WTC11 (cell line): ENCODE measurements at regions of chr7 and their contacts with region 1.

Region 1: DNA sequence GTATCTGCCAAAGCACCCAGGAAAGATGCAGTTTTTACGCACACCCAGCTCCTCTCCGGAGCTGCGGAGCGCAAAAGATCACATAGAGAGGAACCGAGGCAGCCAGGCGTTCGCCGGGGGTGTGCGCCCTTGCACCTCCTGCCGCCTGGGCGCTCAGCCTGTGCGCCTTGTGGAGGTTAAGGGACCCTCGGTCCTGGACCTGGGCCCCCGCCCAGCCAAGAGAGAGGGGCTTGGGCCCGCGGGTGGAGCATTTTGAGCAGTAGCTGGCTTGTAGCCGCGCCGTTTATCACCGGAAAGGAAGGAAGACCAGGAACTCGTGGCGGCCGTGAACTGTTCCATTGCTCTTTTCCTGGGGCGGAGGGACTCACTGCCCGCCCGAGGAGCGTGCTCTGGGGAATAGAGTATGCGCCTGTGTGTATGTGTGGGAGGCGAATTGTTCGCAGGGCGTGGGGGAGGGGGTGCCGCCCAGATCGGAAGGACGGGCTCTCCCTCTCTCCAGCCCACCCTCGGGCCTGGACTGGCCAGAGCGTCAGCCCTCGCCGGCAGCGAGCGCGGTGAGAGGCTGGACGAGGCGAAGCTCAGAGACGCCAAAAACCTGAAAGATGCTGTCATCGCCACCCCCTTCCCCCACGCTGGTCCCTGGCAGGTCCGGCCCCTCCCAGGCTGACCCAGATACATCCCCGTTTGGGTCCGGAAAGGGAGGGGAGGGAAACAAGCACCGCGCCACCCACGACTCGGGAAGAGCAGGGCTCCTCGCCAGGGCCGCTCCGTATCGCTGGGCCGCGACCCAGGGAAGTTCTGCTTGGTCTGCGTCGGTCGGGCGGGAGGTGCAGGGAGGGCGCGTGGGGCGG is 1.2 kb upstream of the WNT2 start:
- DNase-seq: peak; percentile 38
- ATAC-seq: peak; percentile 62
- H3K4me3 Mint-ChIP-seq: peak overlapping the region; percentile 88
- H3K27ac Mint-ChIP-seq: no peak overlapping the region
- H3K4me1 Mint-ChIP-seq: peaks cover 16% of the 10 kb centered on the region
- H3K27me3 Mint-ChIP-seq: peaks cover 94% of the 10 kb centered on the region
- CTCF ChIP-seq: no peak

Region 2: DNA sequence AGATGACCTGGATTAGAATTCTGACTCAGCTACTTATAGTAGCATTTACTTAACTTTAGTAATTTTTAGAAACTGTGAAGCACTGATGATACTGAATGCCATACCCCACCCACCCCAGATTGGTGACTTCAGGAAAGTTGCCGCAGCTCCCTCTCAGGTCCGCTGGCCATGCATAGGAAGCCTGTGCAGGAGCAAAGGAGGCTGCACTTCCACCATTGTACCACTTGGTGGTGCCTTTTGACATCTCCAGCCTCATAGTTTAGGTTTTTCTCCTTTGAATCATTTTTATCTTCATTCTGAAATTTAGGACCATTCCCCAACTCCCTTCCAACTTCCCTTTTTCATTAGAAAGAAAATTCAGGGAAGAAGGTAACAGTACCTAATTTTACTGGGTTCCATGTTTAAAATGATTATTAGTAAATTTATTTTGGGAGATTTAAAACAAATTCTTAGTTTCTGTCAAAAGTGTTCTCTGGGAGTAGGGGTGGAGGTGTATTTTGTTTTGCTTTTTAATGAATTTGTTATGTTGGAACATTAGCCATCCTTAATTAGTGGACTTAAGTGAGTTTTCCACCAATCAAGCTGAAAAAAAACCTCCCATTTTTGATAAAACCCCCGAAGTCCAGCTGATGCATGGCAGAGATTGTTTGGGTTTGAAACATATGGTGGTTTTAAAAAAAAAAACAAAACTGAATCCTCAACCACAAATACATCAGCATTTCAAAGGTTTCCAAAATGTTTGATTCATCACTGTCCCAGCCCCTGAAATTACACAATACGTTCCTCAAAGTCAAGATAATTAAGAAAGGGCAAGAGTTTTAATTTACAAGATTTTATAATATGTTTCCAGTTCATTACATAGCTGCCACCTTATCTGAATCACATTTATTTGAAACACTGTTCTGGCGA is 110.9 kb before region 1 on chr7:
- CTCF ChIA-PET with region 1: interaction called, 24 read pairs
- POLR2A ChIA-PET with region 1: no interaction called
- DNase-seq: peak; percentile 73
- ATAC-seq: peak; percentile 89
- H3K4me3 Mint-ChIP-seq: no peak overlapping the region
- H3K27ac Mint-ChIP-seq: no peak overlapping the region
- H3K4me1 Mint-ChIP-seq: peaks cover 12% of the 10 kb centered on the region
- H3K27me3 Mint-ChIP-seq: no peaks in the 10 kb centered on the region
- CTCF ChIP-seq: peak; percentile 94

Region 3: DNA sequence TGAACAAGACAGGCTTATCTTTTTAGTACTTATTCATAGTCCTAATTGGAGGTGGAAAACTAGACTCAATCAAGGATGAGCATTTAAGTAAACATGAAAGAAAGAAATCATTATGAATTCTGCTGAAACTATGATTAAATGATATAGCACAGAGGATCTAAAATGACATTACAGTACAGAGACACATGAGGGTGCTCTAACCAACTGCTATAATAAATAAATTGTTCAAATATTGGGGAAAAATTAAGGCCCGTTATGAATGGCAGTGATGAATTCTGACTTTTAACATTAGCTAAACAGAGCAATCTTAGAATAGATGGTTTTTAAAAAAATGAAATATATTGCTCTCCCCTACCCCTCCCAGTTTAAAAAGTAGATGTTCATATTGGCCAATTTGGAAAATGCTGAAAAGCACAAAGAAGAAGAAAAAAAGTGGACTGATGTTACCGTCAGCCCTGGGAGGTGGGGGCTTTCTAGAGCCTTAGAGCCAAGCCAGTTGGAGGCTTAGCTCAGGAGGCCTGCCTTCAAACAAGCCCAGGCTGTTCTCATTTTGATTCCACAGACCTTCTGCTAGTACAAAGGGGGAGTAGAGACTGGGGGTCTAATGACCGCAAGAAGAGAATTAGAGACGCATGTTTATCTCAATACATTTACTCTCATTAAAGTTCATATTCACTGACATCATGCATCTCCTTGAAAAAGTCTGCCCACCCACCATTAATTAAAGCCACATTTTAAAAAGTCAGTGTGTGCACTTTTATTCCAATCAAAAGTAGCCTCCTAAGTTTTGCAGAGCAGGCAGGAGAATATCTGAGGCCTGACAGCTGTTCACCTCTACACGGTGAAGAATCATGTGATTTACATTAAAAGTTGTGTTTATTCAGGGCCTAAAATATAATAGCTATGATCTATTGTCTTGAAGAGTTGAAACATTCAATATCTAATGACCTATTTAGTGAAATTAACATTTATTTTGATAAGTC is 11.2 kb before region 1 on chr7:
- CTCF ChIA-PET with region 1: no interaction called
- POLR2A ChIA-PET with region 1: no interaction called
- DNase-seq: no peak
- ATAC-seq: no peak
- H3K4me3 Mint-ChIP-seq: no peak overlapping the region
- H3K27ac Mint-ChIP-seq: no peak overlapping the region
- H3K4me1 Mint-ChIP-seq: peaks cover 14% of the 10 kb centered on the region
- H3K27me3 Mint-ChIP-seq: peaks cover 5% of the 10 kb centered on the region
- CTCF ChIP-seq: no peak